ENCODE measurements at regions of chr11 and their contacts with region 1.

Region 1: DNA sequence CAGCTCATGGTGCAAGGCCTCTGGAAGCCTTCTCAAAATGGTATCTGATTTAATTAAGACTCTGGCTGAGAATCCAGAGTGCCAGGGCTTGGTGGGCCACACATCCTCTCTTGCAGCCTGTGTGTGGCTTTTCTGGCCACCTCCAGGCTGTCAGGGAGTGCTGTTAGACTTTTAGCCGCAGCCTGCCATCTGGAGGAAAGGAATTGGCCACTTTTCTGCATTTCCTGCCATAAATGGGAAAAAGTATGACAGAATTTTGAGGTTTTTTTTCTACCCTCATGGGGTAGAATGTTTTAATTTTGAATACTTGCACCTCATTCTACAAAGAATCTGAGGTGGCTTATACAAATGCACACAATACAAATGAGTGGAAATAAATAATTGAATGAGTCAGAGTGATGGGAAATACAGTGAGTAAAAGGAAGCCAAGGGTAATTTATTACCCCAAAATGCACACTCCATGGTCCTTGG is 218.4 kb downstream of the ADAMTS15 start:
- DNase-seq: no peak
- ATAC-seq: no peak

Region 2: GRCh38 chr11:130487924-130488815 is 178.6 kb before region 1 on chr11:
- intact Hi-C with region 1: no loop called
- DNase-seq: peak; percentile 65
- ATAC-seq: peak; percentile 68 to 81

Region 3: DNA sequence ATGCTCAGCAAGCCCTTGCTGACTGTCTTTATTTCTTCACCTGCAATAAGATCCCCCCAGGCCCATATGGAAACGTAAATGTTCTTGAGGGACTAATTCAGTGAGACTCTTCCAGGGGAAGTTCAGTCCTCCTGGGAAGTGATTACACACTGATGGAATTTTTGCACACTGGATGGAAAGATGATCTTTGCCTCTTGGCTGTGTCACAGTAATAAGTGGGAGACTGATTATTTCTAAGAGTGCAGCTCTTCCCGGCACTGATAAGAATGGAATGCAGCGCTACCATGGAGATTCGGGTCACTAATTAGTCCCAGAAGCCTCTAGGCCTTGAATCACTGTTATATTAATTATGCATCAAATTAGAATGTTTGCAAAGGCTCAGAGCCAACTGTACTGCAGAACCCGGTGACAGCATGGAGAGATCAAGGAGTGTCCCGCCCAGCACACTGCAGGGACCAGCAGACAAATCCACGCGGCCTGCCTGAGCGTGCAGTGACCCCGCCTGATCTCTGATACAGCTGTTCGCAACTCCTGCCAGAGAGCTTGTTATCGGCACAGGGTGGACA is 71.1 kb after region 1 on chr11:
- intact Hi-C with region 1: loop called in 1 of 2 experiments (anchors 5 kb)
- DNase-seq: peak; percentile 74
- ATAC-seq: peak; percentile 94 to 97